ENCODE measurements at regions of chr2 and their contacts with region 1.

Region 1: GRCh38 chr2:197499594-197500526 is at the starts of genes HSPD1 and HSPE1:
- DNase-seq: peak; percentile 99
- H3K4me3 Mint-ChIP-seq: peak within 1 kb of the TSS; percentile 97
- H3K27ac Mint-ChIP-seq: peak within 1 kb of the TSS; percentile 97
- H3K4me1 Mint-ChIP-seq: peaks cover 56% of the 10 kb centered on the region
- H3K27me3 Mint-ChIP-seq: no peaks in the 10 kb centered on the region
- total RNA-seq, gene HSPD1: 839 to 853 TPM
- total RNA-seq, gene HSPE1: 282 to 283 TPM

Region 2: DNA sequence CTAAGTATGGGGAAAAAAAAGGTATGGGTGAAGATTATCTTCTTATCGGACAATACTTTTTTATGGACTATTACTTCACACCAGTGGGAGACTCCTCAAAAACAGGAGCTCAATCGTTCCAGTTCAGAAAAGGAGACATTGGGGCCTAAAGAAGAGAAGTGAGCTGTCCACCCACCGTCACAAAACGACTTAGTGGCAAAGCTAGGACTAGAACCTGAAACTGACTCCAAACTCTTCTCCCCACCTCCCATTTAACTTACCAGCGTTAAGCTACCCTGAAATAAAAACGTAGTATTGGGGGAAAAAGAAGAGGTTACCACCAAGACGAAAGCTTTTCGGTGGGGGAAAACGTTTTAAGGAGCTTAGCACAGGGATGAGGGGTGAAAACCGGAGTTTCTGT is 700.9 kb before region 1 on chr2:
- CTCF ChIA-PET with region 1: no interaction called
- POLR2A ChIA-PET with region 1: no interaction called
- intact Hi-C with region 1: loop called (anchors 1 kb)
- DNase-seq: no peak
- H3K4me3 Mint-ChIP-seq: peak overlapping the region; percentile 94
- H3K27ac Mint-ChIP-seq: peak overlapping the region; percentile 83
- H3K4me1 Mint-ChIP-seq: peaks cover 41% of the 10 kb centered on the region
- H3K27me3 Mint-ChIP-seq: peaks cover 5% of the 10 kb centered on the region

Region 3: GRCh38 chr2:197198890-197199289 is 301.0 kb before region 1 on chr2:
- CTCF ChIA-PET with region 1: no interaction called
- POLR2A ChIA-PET with region 1: no interaction called
- intact Hi-C with region 1: loop called (anchors 5 kb)
- DNase-seq: peak; percentile 95
- H3K4me3 Mint-ChIP-seq: peak overlapping the region; percentile 80
- H3K27ac Mint-ChIP-seq: peak overlapping the region; percentile 93
- H3K4me1 Mint-ChIP-seq: peaks cover 90% of the 10 kb centered on the region
- H3K27me3 Mint-ChIP-seq: no peaks in the 10 kb centered on the region

Region 4: GRCh38 chr2:197453161-197453914 is 46.5 kb before region 1 on chr2 and contains the start of gene COQ10B:
- CTCF ChIA-PET with region 1: interaction called, 5 read pairs
- POLR2A ChIA-PET with region 1: interaction called, 25 read pairs
- intact Hi-C with region 1: loop called (anchors 1 kb)
- DNase-seq: peak; percentile 100
- H3K4me3 Mint-ChIP-seq: peak within 1 kb of the TSS; percentile 99
- H3K27ac Mint-ChIP-seq: peak within 1 kb of the TSS; percentile 100
- H3K4me1 Mint-ChIP-seq: peaks cover 39% of the 10 kb centered on the region
- H3K27me3 Mint-ChIP-seq: no peaks in the 10 kb centered on the region
- total RNA-seq, gene COQ10B: 21.5 TPM

Region 5: GRCh38 chr2:197487385-197487784 is 12.5 kb before region 1 on chr2:
- CTCF ChIA-PET with region 1: interaction called, 3 read pairs
- POLR2A ChIA-PET with region 1: interaction called, 21 read pairs
- intact Hi-C with region 1: no loop called
- DNase-seq: no peak
- H3K4me3 Mint-ChIP-seq: no peak overlapping the region
- H3K27ac Mint-ChIP-seq: peak overlapping the region; percentile 62
- H3K4me1 Mint-ChIP-seq: peaks cover 20% of the 10 kb centered on the region
- H3K27me3 Mint-ChIP-seq: no peaks in the 10 kb centered on the region

Region 6: DNA sequence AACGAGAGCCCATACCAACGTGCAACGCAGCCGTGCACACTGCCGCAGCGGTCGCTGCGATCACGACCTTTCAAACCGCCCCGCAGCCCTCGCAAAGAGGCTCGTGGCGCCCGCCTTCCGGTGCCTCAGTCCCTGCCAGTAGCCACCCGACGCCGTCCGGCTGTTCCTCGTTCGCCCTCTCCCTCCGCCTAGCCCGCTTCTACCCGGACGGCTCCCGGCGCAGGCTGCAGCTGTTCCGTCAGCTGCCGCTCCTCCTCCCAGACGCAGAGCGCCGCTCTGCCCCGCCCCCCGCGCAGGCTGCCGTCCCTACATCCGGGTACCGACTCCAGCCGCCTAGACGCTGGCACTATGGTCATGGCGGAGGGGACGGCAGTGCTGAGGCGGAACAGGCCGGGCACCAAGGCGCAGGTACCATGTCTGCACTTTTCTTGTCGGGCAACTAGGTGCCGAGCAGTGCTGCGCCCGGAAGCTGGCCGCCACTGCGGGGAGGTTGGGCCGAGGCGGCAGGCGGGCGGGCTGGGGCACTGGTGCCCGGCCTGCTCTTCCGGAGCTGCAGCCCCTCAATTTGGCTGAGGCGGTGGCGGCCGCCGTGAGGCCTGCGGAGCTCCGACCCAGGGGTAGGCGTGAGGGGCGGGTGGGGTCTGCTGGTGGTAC is 16.0 kb after region 1 on chr2 and contains the start of gene MOB4:
- CTCF ChIA-PET with region 1: interaction called, 8 read pairs
- POLR2A ChIA-PET with region 1: interaction called, 71 read pairs
- intact Hi-C with region 1: loop called (anchors 1 kb)
- DNase-seq: peak; percentile 96
- H3K4me3 Mint-ChIP-seq: peak within 1 kb of the TSS; percentile 92
- H3K27ac Mint-ChIP-seq: peak within 1 kb of the TSS; percentile 88
- H3K4me1 Mint-ChIP-seq: peaks cover 24% of the 10 kb centered on the region
- H3K27me3 Mint-ChIP-seq: no peaks in the 10 kb centered on the region
- total RNA-seq, gene MOB4: 18.9 to 19.5 TPM

Region 7: DNA sequence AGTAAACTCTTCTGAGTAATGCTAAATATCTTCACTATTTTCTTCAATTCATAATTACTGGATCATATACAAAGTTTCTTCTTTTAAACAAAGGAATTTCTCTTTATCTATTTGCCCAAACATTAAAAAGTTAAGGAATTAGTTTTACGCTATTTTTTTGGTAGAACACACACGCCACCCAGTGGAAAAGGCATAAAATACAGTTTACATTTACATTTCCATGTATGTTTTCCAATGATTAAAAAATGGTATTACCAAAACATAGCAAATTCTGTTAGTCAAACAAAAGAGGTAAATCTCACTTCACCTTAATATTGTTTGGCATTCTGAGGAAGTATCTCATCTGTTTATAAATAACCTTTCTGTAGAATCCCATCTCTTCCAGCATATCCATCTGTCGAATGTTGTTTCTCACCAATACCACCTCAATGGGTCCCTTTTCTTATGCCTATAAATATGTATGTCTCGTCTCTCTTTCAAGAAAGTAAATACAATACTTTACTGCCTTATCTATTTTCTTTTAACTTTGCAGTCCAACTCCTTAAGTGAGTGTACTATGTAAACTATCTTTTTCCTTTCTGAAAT is 278.1 kb after region 1 on chr2:
- CTCF ChIA-PET with region 1: interaction called, 3 read pairs
- POLR2A ChIA-PET with region 1: no interaction called
- intact Hi-C with region 1: loop called (anchors 5 kb)
- DNase-seq: no peak
- H3K4me3 Mint-ChIP-seq: no peak overlapping the region
- H3K27ac Mint-ChIP-seq: no peak overlapping the region
- H3K4me1 Mint-ChIP-seq: no peaks in the 10 kb centered on the region
- H3K27me3 Mint-ChIP-seq: peaks cover 5% of the 10 kb centered on the region

Measured in activated CD4-positive, alpha-beta memory T cell treated with anti-CD3 and anti-CD28 coated beads for 36 hours (primary cell).